Common myeloid progenitor, CD34-positive (primary cell): ENCODE measurements at regions of chr11 and their contacts with region 1.

Region 1: DNA sequence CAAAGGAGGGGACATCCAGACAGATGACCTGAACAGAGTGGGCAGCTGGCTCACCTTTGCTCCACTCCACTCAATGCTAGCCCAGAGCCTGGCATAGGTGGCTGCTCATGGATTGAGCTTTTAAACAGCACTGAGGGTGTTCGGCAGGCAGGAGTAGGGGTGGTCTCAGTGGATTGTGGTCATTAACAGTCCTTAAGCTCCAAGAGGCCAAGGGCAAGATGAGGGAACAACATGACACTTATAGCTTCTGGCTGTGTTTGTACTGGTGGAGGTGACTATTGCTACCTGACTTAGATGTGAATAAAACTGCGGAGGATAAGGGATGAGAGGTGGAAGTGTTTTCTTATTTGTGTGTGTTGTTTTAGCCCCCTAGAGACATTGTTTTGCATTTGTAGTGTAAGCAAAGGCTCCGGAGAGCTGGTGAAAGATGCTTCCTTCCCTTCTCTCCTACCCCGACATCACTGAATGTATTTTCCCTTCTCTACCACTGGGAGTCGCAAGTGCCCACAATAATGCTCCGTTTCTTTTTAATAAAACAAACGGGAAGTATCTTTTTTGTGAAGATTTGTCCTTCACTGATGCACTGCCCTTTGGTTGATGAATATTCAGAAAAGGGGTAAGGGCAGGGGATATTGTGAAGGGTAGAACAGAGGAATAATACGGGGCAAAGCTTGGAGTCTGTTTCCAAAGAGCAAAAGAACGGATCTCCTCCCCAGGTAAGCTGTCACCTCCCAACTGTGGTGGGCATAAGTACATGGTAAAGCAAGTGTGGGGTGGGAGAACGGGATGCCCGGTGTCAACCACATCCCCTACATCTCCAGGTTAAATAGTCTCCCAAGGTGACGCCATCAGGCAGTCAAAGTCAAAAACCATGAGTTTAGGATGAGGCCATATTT is 27.5 kb upstream of the MTNR1B start:
- DNase-seq: peak; percentile 17 to 66 (median 56)
- H3K4me3 ChIP-seq: no peak overlapping the region
- H3K27ac ChIP-seq: no peak overlapping the region
- H3K4me1 ChIP-seq: no peaks in the 10 kb centered on the region
- H3K27me3 ChIP-seq: peaks cover 0 to 2% (median 0%) of the 10 kb centered on the region in 5 experiments

Region 2: DNA sequence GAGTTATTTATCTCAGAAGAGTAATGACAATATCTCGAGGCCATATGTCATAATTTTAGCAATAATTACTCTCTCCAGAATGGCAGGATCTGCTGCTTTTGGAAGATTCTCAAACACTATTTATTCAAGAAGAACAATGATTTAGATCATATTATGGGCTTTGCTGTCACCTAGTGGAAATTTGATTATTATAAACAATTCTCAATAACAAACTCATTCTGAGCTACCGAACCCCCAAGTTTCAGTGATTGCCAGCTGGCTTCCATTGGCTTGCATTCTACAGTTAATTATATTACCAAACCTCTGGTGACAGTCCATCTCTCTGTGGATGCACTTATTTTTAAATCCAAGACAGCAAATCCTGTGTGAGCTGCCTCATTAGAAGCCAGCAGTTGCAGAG is 283.7 kb after region 1 on chr11:
- CTCF ChIA-PET with region 1: interaction called, 42 read pairs
- POLR2A ChIA-PET with region 1: no interaction called
- DNase-seq: peak; percentile 18 to 54 (median 42)
- H3K4me3 ChIP-seq: no peak overlapping the region
- H3K27ac ChIP-seq: no peak overlapping the region
- H3K4me1 ChIP-seq: no peaks in the 10 kb centered on the region
- H3K27me3 ChIP-seq: no peaks in the 10 kb centered on the region